ENCODE measurements at regions of chr17 and their contacts with region 1.

Region 1: DNA sequence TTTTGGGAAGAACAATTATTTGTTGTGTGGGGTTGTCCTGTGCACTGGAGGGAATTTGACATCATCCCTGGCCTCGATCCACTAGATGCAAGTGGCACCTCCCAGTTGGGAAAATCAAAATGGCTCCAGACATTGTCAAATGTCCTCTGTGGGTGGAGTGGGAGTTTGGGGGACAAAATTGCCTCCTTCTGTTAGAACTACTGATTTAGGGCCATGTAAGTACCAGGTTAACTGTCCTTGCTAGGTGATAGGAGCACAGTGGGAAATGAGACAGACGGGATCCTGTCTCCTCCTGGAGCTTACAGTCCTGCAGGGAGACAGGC is 56.8 kb downstream of the ARHGAP23 start:
- DNase-seq: no peak
- H3K4me3 ChIP-seq: peak overlapping the region in 2 of 59 donors; percentile 3 to 8
- H3K27ac ChIP-seq: peak overlapping the region; percentile 4 to 92 (median 85)
- H3K27me3 ChIP-seq: no peaks in the 10 kb centered on the region
- CTCF ChIP-seq: peak in 18 of 56 donors; percentile 0 to 39 (median 7)

Region 2: DNA sequence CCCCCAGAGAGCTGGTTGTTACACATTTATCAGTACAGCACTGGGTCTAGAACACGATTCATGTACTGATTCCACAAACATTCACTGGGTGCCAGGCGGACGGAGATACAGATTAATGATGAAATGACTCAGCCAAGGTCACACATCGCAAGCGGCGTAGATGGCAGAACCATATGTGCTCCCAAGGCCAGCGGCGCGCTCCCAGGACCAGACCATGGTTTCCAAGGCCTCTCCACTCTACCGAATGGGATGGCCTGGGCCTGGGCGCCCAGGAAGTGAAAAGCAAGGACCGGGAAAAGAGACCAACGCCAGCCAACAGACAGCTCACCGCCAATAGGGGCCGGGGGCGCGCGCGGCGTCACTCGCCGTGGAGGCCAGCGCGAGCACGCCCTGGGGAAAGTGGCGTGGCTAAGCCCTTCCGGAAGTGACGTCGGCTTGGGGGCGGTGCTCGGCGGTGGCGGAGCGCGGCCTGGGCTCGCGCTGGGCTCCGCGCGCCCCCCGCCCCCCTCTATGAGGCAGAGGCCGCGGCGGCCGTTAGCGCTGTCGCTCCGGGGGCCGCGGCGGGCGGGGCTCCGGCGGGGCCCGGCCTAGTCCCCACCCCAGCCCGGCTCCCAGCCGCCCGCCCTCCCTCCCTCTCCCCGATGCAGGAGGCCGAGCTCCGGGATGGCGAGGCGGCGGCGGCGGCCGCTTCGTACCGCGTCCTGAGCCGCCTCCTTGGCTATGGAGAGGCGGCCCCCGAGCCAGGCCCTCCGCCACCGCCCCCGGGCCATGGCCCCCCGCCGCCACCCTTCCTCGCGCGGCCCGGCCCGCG is 133.5 kb before region 1 on chr17 and contains the start of gene SOCS7:
- intact Hi-C with region 1: loop called in 1 of 2 experiments (anchors 5 kb)
- DNase-seq: peak; percentile 84 to 95 (median 92)
- H3K4me3 ChIP-seq: peak within 1 kb of the TSS; percentile 71 to 95 (median 88)
- H3K27ac ChIP-seq: peak within 1 kb of the TSS; percentile 11 to 95 (median 85)
- H3K27me3 ChIP-seq: no peaks in the 10 kb centered on the region
- CTCF ChIP-seq: peak in 36 of 56 donors; percentile 7 to 55 (median 31)
- total RNA-seq, gene SOCS7: 34.3 to 82.0 (median 51.3) TPM

Region 3: GRCh38 chr17:38421171-38421841 is 63.8 kb before region 1 on chr17:
- intact Hi-C with region 1: loop called (anchors 5 kb)
- DNase-seq: no peak
- H3K4me3 ChIP-seq: peak overlapping the region in 46 of 59 donors; percentile 0 to 72 (median 30)
- H3K27ac ChIP-seq: peak overlapping the region in 54 of 59 donors; percentile 8 to 100 (median 70)
- H3K27me3 ChIP-seq: peaks cover 0 to 3% (median 0%) of the 10 kb centered on the region in 45 donors
- CTCF ChIP-seq: no peak

Region 4: DNA sequence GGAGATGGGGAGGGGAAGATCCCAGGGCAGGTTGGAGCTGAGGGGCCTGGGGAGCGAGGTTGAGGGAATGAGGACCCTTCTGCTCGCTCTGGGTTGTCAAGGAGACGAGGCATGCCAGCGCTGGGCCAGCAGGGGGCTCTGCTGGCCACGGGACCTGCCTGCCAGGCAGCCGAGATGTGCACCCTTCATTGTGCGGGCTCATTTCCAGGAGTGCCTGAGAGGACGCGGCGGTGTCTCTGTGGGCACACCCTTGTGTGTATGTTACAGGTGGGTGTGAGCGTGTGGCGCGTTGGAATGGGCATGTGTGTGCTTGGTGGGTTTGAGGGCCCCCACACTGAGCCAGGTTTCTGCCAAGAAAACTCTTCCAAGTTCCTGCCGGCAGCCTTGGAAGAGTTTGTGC is 41.0 kb before region 1 on chr17:
- intact Hi-C with region 1: loop called (anchors 2 to 5 kb)
- DNase-seq: peak; percentile 71 to 84 (median 78)
- H3K4me3 ChIP-seq: peak overlapping the region in 42 of 59 donors; percentile 3 to 56 (median 30)
- H3K27ac ChIP-seq: peak overlapping the region in 57 of 59 donors; percentile 3 to 100 (median 73)
- H3K27me3 ChIP-seq: no peaks in the 10 kb centered on the region
- CTCF ChIP-seq: peak; percentile 67 to 96 (median 87)